CD8-positive, alpha-beta T cell (primary cell): ENCODE measurements at regions of chr22 and their contacts with region 1.

Region 1: GRCh38 chr22:39332441-39333064 is 13.1 kb upstream of the RPL3 start:
- DNase-seq: no peak
- ATAC-seq: no peak
- H3K4me3 ChIP-seq: no peak overlapping the region
- H3K4me3 Mint-ChIP-seq: no peak overlapping the region
- H3K27ac ChIP-seq: no peak overlapping the region
- H3K27ac Mint-ChIP-seq: no peak overlapping the region
- H3K4me1 ChIP-seq: no peaks in the 10 kb centered on the region
- H3K4me1 Mint-ChIP-seq: peaks cover 7% of the 10 kb centered on the region
- H3K27me3 ChIP-seq: no peaks in the 10 kb centered on the region
- H3K27me3 Mint-ChIP-seq: no peaks in the 10 kb centered on the region
- CTCF ChIP-seq: no peak

Region 2: DNA sequence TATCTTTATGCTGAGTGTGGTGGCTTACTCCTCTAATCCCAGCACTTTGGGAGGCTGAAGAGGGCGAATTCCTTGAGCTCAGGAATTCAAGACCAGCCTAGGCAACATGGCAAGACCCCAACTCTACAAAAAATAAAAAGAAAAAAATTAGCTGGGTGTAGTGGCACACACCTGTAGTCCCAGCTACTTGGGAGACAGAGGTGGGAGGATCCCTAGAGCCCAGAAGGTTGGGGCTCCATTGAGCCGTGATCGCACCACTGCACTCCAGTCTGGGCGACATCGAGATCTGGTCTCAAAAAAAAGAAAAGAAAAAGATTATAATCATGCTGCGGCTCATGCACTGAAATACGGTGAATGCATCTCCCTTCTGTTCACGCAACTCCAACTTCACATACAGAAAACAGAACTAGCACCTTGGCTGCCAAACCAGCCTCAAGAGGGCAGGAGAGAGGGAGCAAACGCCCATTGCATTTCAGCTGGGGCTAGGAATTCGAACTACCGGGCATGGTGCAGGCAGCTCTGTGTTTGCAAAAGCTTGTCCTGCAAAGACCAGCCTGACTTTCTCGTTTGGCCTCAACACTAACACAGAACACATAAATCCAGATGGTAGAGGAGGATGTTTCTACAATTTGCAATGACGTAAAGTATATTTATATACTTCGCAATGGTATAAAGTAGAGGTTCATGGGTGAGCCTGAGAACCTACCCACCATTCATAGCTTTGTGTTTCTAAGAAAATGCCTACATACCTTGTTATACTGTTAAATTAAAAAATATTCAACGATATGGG is 10.9 kb after region 1 on chr22:
- CTCF ChIA-PET with region 1: interaction called, 16 read pairs
- POLR2A ChIA-PET with region 1: no interaction called
- intact Hi-C with region 1: no loop called
- DNase-seq: peak; percentile 32 to 76 (median 63)
- ATAC-seq: peak; percentile 91
- H3K4me3 ChIP-seq: no peak overlapping the region
- H3K4me3 Mint-ChIP-seq: no peak overlapping the region
- H3K27ac ChIP-seq: no peak overlapping the region
- H3K27ac Mint-ChIP-seq: no peak overlapping the region
- H3K4me1 ChIP-seq: no peaks in the 10 kb centered on the region
- H3K4me1 Mint-ChIP-seq: peaks cover 4% of the 10 kb centered on the region
- H3K27me3 ChIP-seq: no peaks in the 10 kb centered on the region
- H3K27me3 Mint-ChIP-seq: no peaks in the 10 kb centered on the region
- CTCF ChIP-seq: peak; percentile 60